Activated CD8-positive, alpha-beta T cell treated with anti-CD3 and anti-CD28 coated beads for 36 hours (primary cell): ENCODE measurements at regions of chr19 and their contacts with region 1.

Region 1: DNA sequence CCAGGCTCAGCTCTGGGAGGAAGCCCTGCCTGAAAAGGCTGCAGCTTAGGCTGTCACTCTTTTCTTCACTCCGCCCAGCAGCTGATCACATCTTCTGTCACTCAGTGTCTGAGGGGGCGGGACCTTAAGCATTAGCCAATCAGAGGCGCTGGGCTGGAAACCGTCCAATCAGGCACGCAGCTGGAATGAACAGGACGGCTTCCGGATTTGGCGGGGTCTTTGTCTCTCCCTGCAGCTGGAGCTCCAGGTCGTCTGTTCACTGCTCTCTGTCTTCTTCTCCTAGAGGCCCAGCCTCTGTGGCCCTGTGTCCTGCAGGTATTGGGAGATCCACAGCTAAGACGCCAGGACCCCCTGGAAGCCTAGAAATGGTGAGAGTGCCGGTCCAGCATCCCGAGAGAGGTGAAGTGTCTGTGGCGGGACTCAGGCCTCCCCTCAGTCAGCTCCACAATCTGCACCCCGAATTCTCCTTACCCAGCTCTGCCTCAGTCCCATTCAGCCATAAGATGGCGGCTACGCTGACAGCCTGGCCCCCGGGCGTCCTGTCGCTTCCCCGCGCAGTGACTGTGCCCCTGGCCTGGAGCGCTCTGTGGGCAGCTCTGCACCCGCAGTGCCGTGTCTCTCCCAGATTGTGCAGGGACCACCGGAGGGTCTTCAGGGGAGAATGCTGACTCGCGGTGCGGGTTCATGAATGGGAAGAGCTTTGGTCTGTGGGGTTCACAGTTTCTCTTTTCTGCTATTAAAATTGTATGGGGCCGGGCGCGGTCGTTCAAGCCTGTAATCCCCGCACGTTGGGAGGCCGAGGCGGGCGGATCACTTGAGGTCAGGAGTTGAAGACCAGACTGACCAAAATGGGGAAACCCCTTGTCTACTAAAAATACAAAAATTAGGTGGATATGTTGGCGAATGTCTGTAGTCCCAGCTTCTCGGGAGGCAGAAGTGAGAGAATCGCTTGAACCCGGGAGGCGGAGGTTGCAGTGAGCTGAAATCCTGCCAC is at the start of gene ZNF66:
- DNase-seq: peak; percentile 98
- ATAC-seq: peak; percentile 98
- H3K4me3 Mint-ChIP-seq: peak within 1 kb of the TSS; percentile 100
- H3K27ac Mint-ChIP-seq: peak within 1 kb of the TSS; percentile 98
- H3K4me1 Mint-ChIP-seq: peaks cover 26% of the 10 kb centered on the region
- H3K27me3 Mint-ChIP-seq: no peaks in the 10 kb centered on the region
- CTCF ChIP-seq: no peak
- total RNA-seq, gene ZNF66: 8.9 to 9.3 TPM

Region 2: DNA sequence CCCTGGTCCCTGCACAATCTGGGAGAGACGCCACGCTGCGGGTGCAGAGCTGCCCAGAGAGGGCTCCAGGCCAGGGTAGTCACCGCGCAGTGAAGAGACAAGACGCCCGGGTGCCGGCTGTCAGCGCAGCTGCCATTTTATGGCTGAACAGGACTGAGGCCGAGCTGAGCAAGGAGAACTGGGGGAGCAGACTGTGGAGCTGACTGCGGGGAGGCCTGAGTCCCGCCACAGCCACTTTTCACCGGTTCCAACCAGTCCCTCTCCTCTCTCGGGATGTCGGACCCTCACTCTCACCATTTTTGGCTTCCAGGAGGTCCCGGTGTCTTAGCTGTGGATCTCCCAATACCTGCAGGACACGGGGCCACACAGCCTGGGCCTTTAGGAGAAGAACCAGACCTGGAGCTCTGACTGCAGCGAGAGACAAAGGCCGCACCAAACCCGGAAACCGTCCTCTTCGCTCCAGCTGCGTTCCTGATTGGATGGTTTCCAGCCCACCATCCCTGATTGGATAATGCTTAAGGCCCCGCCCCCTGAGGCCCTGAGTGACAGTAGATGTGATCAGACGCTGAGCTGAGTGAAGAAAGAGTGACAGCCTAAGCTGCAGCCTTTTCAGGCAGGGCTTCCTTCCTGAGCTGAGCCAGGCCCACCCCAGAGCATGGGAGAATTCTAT is 115.1 kb before region 1 on chr19 and contains the start of gene ZNF626:
- CTCF ChIA-PET with region 1: no interaction called
- POLR2A ChIA-PET with region 1: interaction called, 11 read pairs
- intact Hi-C with region 1: no loop called
- DNase-seq: peak; percentile 98
- ATAC-seq: peak; percentile 99
- H3K4me3 Mint-ChIP-seq: peak within 1 kb of the TSS; percentile 90
- H3K27ac Mint-ChIP-seq: peak within 1 kb of the TSS; percentile 92
- H3K4me1 Mint-ChIP-seq: peaks cover 31% of the 10 kb centered on the region
- H3K27me3 Mint-ChIP-seq: no peaks in the 10 kb centered on the region
- CTCF ChIP-seq: no peak
- total RNA-seq, gene ZNF626: 9.3 to 11.1 TPM

Region 3: GRCh38 chr19:20791806-20792205 is 15.4 kb after region 1 on chr19:
- CTCF ChIA-PET with region 1: no interaction called
- POLR2A ChIA-PET with region 1: no interaction called
- intact Hi-C with region 1: no loop called
- DNase-seq: no peak
- ATAC-seq: no peak
- H3K4me3 Mint-ChIP-seq: no peak overlapping the region
- H3K27ac Mint-ChIP-seq: no peak overlapping the region
- H3K4me1 Mint-ChIP-seq: peaks cover 5% of the 10 kb centered on the region
- H3K27me3 Mint-ChIP-seq: no peaks in the 10 kb centered on the region
- CTCF ChIP-seq: no peak